ENCODE measurements at regions of chrX and their contacts with region 1.

Region 1: GRCh38 chrX:72545990-72546389 is 26.7 kb downstream of the HDAC8 start:
- DNase-seq: peak; percentile 32
- H3K4me3 ChIP-seq: no peak overlapping the region
- H3K27ac ChIP-seq: no peak overlapping the region
- H3K4me1 ChIP-seq: no peaks in the 10 kb centered on the region
- H3K27me3 ChIP-seq: no peaks in the 10 kb centered on the region
- CTCF ChIP-seq: peak; percentile 16 to 23
- POLR2A ChIP-seq: no peak

Region 2: DNA sequence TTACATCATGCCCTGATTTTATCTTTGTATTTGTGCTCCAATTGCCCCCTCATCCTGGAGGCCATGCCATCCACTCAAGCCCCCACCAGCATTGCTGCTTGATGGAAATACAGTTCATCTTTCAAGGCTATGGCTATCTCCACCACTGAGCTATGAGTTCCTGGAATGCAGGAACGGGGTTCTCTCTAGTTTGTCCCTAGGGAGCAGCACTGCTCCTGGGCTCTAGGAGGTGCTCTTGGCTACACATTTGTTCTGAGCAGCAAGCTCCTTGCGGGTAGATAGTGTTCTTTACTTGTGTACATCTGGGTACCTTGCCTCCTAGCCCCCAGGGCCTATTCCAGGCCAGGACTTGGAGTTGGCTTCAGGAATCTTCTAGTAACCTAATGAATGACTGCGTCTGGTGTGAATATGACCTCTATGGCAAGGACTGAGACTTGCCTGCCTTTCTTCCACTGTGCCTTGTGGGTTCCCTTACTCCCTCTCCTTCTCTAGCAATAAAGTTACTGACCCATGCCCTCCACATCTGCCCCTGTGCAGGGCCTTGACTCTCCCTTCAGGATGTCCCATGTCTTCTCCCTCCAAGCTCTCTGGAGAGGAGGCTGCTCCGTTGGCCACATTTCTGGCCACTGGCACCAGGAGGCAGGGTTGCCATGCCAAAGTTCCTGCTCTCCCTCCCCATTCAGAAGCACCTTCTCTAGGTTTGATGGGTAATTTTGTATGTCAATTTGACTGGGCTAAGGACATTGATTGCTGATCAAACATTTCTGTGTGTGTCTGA is 247.8 kb before region 1 on chrX:
- CTCF ChIA-PET with region 1: interaction called, 30 read pairs
- POLR2A ChIA-PET with region 1: no interaction called
- dilution Hi-C with region 1: no loop called
- intact Hi-C with region 1: no loop called
- DNase-seq: no peak
- H3K4me3 ChIP-seq: no peak overlapping the region
- H3K27ac ChIP-seq: no peak overlapping the region
- H3K4me1 ChIP-seq: no peaks in the 10 kb centered on the region
- H3K27me3 ChIP-seq: peaks cover 25 to 30% of the 10 kb centered on the region in 2 experiments
- CTCF ChIP-seq: peak; percentile 16 to 40
- POLR2A ChIP-seq: no peak

Measured in endothelial cell of umbilical vein (primary cell).